GM13976 (cell line): ENCODE measurements at regions of chr7 and their contacts with region 1.

Region 1: DNA sequence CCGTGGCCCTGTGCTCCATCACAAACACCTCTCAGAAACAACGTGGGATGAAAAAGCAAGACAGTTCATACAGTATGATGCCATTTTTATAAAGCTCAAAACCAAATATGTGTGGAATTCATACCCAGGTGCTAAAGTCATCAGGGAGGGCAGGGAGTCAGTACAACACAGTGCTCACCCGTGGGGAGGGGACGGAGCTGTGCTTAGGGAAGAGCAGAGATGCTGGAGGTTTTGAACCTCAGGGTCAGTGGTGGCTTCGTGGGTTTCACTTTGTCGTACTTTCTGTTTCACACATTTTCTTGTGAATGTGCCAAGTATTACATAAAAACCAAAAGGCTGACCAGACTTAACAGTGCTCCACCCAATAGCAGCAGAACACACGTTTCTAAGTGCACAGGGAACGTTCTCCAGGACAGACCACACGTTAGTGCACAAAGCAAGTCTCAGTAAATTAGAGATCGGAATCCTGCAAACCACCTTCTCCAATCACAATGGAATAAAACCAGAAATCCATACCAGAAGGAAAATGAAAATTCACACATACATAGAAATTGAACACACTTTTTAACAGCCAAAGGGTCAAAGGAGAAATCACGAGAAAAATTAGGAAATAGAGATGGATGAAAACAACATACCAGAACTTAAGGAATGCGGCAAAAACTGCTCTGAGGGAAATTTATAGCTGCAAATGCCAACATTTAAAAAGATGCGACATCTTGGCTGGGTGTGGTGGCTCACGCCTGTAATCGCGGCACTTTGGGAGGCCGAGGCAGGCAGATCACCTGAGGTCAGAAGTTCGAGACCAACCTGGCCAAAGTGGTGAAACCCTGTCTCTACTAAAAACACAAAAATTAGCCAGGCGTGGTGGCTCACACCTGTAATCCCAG is 21.4 kb downstream of the ZMIZ2 start:
- DNase-seq: peak; percentile 77
- CTCF ChIP-seq: no peak

Region 2: DNA sequence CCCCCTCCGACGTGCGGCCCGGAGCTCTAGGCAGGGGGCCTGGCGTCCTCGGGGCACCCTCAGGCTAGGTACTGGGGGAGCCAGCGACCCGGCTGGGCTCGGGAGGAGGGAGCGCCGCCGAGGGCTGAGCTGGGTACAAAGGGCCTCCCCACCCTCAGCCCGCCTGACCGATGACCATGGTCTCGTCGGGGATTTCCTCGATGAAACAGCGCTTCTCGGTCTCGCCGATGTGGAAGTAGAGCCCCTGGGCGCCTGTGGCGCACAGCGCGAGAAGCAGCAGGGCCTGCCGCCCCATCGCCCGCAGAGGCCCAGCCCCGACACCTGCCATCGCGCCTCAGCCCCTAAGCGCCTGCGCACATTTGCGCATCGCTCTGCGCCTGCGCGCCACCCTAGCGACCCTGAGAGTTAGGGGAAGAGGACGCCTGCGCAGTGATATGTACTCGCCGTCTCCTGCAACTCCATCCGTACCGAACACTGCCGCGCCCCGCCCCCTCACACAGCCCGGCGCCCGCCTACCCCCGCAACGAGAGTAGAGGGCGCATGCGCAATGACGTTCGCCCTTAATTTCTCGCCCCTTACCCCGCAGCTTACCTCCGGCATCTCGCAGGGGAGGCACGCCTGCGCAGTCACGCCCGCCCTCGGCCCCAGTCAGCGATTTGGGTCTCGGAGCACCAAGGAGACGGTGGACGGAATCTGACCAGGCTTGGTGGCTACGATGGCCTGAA is 188.0 kb before region 1 on chr7 and contains the start of gene TMED4:
- in situ Hi-C with region 1: loop called (anchors 25 kb)
- DNase-seq: peak; percentile 100
- CTCF ChIP-seq: no peak

Region 3: GRCh38 chr7:44693721-44694285 is 76.2 kb before region 1 on chr7:
- in situ Hi-C with region 1: no loop called
- DNase-seq: no peak
- CTCF ChIP-seq: no peak

Region 4: GRCh38 chr7:44894888-44895580 is 125.0 kb after region 1 on chr7:
- in situ Hi-C with region 1: no loop called
- DNase-seq: no peak
- CTCF ChIP-seq: no peak